Calu3 (cell line): ENCODE measurements at regions of chr22 and their contacts with region 1.

Region 1: DNA sequence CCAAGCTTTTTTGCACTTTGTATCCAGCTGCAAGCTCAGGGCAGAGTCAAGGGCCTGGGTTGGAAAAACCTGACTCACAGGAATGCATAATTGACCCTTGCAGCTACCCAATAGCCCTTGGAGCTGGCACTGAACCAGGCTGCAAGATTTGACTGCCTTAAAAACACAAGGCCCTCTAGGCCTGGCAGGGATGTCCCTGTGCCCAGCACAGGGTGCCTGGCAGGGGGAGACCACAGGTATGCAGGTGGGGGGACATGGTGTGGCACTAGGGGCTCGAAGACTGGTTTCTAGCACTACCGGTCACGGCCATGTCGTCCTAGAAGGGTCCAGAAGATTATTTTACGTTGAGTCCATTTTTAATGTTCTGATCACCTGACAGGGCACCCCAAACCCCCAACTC is 30.2 kb downstream of the SBF1 start:
- DNase-seq: peak; percentile 40
- H3K4me3 Mint-ChIP-seq: no peak overlapping the region
- H3K27ac Mint-ChIP-seq: no peak overlapping the region
- H3K4me1 Mint-ChIP-seq: peaks cover 11% of the 10 kb centered on the region
- H3K27me3 Mint-ChIP-seq: no peaks in the 10 kb centered on the region
- CTCF ChIP-seq: no peak

Region 2: DNA sequence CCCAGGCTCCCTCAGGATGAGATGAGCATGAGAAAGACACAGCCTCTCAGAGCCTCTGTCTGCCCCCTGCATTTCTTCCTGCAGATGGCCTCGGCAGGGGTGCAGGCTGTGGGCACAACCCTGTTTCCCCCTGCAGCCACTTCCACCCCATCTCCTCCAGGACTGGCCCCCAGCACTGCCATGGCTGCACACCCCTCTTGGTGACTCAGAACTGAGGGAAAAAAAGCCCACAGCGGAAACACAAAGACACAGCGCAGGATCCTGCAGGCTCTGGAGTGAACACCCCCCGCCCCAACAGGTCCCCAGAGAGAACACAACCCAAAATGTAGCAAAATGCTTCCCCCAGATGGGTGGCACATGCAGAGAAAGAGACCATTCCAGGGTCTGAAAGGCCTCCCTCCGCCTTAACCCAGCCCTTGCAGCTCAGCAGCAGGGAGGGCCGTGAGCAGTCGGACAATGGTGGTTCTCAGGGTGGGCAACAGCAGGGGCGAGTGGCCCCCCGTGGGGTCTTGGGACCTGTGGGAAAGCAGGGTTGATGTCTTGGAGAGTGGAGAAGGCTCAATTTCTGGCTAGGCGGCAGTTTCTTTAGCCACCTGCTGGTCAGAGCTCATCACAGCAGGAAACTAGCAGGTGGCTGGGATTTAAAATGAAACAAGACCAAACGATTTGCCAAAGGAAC is 207.8 kb before region 1 on chr22:
- CTCF ChIA-PET with region 1: no interaction called
- intact Hi-C with region 1: no loop called
- DNase-seq: peak; percentile 36
- H3K4me3 Mint-ChIP-seq: no peak overlapping the region
- H3K27ac Mint-ChIP-seq: no peak overlapping the region
- H3K4me1 Mint-ChIP-seq: peaks cover 8% of the 10 kb centered on the region
- H3K27me3 Mint-ChIP-seq: no peaks in the 10 kb centered on the region
- CTCF ChIP-seq: peak; percentile 62

Region 3: DNA sequence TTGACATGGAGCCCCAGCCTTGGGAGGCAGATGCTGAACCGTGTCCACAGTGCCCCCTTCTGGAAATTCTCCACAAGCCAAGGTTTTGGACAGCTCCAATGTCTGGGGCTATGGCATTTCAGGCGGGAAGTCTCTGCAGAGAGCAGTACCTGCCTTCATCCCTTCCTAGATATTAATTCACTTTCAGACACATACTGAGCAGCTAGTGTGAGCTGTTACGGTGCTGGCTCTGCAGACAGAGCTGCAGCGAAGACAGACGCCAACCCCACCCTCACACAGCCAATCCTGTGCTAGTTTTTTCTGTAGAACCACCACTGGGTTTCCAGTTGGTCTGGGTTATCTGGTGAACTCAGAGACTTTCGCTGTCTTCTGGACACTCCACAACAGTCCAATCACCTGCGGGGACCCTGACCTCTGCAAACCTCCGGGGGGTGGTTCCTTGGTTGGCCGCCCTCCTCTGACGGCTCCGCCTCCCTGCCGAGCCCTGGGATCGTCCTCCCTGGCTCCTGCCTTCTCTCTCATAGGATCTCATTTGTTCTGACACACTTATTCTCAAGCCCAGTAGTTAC is 53.7 kb after region 1 on chr22:
- CTCF ChIA-PET with region 1: no interaction called
- intact Hi-C with region 1: loop called (anchors 10 kb)
- DNase-seq: peak; percentile 83
- H3K4me3 Mint-ChIP-seq: peak overlapping the region; percentile 48
- H3K27ac Mint-ChIP-seq: no peak overlapping the region
- H3K4me1 Mint-ChIP-seq: peaks cover 32% of the 10 kb centered on the region
- H3K27me3 Mint-ChIP-seq: no peaks in the 10 kb centered on the region
- CTCF ChIP-seq: peak; percentile 77